ENCODE measurements at regions of chr12 and their contacts with region 1.

Region 1: DNA sequence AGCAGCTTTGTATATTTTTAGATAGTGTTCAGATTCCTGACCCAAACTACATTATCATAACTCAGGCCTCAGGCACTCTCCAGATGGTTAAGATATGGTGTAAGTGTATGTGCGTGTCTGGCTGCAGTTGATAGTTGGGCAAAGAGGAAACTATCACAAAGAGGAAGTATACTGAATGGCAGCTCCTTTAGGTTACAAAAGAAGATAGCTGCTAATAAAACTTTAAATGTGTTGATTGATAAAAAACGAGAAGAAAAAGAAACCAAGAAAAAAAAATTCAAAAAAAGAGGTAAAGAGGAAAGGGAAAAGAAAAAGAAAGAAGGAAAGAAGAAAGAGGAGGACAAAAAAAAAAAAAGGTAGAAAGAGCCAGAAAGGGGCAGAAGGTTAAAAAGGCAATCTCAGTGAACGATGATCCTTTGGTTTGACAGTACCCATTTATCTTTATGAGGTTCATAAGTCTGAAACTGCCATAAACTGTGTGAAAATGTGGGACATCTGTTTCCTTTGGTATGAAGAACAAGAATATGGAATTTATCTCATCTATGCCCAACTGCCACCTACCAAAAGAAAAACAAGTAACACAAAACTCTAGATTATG is 42.2 kb downstream of the TAOK3 start:
- DNase-seq: no peak
- ATAC-seq: no peak
- H3K4me3 ChIP-seq: no peak overlapping the region
- H3K4me3 Mint-ChIP-seq: no peak overlapping the region
- H3K27ac ChIP-seq: no peak overlapping the region
- H3K27ac Mint-ChIP-seq: peak overlapping the region in 1 of 2 donors; percentile 74
- H3K4me1 ChIP-seq: peaks cover 0 to 6% of the 10 kb centered on the region in 2 experiments
- H3K4me1 Mint-ChIP-seq: peaks cover 46 to 57% (median 51%) of the 10 kb centered on the region in 3 donors
- H3K27me3 ChIP-seq: no peaks in the 10 kb centered on the region
- H3K27me3 Mint-ChIP-seq: no peaks in the 10 kb centered on the region

Region 2: DNA sequence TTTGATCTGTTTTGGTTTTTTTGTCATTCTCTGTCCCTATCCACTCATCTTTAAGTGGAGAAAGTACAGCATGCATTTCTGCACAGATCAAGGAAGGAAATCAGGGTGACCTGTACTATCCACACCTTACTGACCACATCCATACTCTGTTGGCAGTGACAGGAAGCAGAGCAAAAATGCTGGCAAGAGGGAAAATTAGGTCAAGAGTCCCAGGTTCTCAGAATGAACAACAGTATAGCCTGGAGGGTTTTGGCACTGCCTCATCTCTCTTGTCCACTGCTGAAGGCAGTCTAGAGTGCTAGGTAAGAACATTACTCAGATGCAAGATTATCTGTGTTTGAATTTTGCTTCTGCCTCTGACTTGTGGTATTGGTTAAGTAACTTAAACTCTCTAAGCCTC is 28.5 kb before region 1 on chr12:
- CTCF ChIA-PET with region 1: no interaction called
- POLR2A ChIA-PET with region 1: interaction called in 1 of 2 experiments, 16 read pairs
- DNase-seq: no peak
- ATAC-seq: no peak
- H3K4me3 ChIP-seq: no peak overlapping the region
- H3K4me3 Mint-ChIP-seq: no peak overlapping the region
- H3K27ac ChIP-seq: no peak overlapping the region
- H3K27ac Mint-ChIP-seq: peak overlapping the region in 1 of 2 donors; percentile 3
- H3K4me1 ChIP-seq: peaks cover 0 to 2% of the 10 kb centered on the region in 2 experiments
- H3K4me1 Mint-ChIP-seq: peaks cover 42 to 49% (median 43%) of the 10 kb centered on the region in 3 donors
- H3K27me3 ChIP-seq: no peaks in the 10 kb centered on the region
- H3K27me3 Mint-ChIP-seq: no peaks in the 10 kb centered on the region

Measured in T-cell (primary cell).